Body of pancreas (tissue), 4 donors: ENCODE measurements at regions of chr1 and their contacts with region 1.

Region 1: GRCh38 chr1:214123061-214123784 is 135.4 kb downstream of the PROX1 start:
- DNase-seq: peak; percentile 71 to 88 (median 80)
- ATAC-seq: peak; percentile 87
- H3K4me3 ChIP-seq: no peak overlapping the region
- H3K27ac ChIP-seq: peak overlapping the region in 3 of 4 donors; percentile 55 to 80 (median 78)
- H3K4me1 ChIP-seq: peaks cover 19% of the 10 kb centered on the region
- H3K27me3 ChIP-seq: no peaks in the 10 kb centered on the region
- CTCF ChIP-seq: peak; percentile 36 to 88 (median 86)
- POLR2A ChIP-seq: no peak

Region 2: GRCh38 chr1:213256438-213257087 is 866.7 kb before region 1 on chr1:
- intact Hi-C with region 1: loop called (anchors 10 kb)
- DNase-seq: no peak
- ATAC-seq: no peak
- H3K4me3 ChIP-seq: no peak overlapping the region
- H3K27ac ChIP-seq: no peak overlapping the region
- H3K4me1 ChIP-seq: no peaks in the 10 kb centered on the region
- H3K27me3 ChIP-seq: no peaks in the 10 kb centered on the region
- CTCF ChIP-seq: no peak
- POLR2A ChIP-seq: no peak

Region 3: GRCh38 chr1:213374369-213374768 is 748.9 kb before region 1 on chr1:
- intact Hi-C with region 1: loop called (anchors 10 kb)
- DNase-seq: peak; percentile 60 to 74 (median 66)
- ATAC-seq: peak; percentile 67
- H3K4me3 ChIP-seq: no peak overlapping the region
- H3K27ac ChIP-seq: no peak overlapping the region
- H3K4me1 ChIP-seq: peaks cover 8% of the 10 kb centered on the region
- H3K27me3 ChIP-seq: no peaks in the 10 kb centered on the region
- CTCF ChIP-seq: peak; percentile 72 to 92 (median 79)
- POLR2A ChIP-seq: no peak

Region 4: DNA sequence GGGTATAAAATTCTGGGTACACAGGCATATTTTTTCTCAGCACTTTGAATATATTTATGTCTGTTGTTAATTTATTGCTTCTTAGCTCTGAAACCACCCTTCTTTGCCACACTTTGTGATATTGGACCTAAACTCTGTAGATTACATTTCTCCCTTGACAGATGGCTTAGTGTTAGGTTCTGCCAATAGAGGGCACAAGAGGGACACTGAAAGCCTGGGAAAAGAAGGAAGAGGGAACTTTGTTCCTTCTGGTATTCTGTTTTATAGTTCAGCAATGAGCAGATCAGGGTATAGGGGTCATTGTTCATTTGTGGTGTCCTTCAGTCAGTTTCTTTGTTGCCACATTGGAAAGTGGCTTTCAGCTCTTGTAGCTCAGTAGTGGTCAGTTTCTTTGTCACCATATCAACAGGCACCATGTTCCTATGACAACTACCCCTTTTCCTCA is 559.0 kb before region 1 on chr1:
- intact Hi-C with region 1: loop called (anchors 5 kb)
- DNase-seq: peak; percentile 31 to 69 (median 42)
- ATAC-seq: peak; percentile 77
- H3K4me3 ChIP-seq: no peak overlapping the region
- H3K27ac ChIP-seq: no peak overlapping the region
- H3K4me1 ChIP-seq: peaks cover 5% of the 10 kb centered on the region
- H3K27me3 ChIP-seq: no peaks in the 10 kb centered on the region
- CTCF ChIP-seq: peak in 6 of 7 experiments; percentile 46 to 81 (median 73)
- POLR2A ChIP-seq: no peak